ENCODE measurements at regions of chr7 and their contacts with region 1.

Region 1: GRCh38 chr7:7640221-7641128 is at the start of gene UMAD1:
- DNase-seq: peak; percentile 96 to 99
- ATAC-seq: peak; percentile 99 to 100 (median 100)
- H3K4me3 ChIP-seq: peak within 1 kb of the TSS; percentile 69 to 94 (median 78)
- H3K27ac ChIP-seq: peak within 1 kb of the TSS; percentile 55 to 94 (median 86)
- H3K4me1 ChIP-seq: peaks cover 2 to 28% (median 18%) of the 10 kb centered on the region in 9 donors
- H3K27me3 ChIP-seq: no peaks in the 10 kb centered on the region
- CTCF ChIP-seq: no peak
- total RNA-seq, gene UMAD1: 13.4 to 24.7 (median 18.0) TPM

Region 2: DNA sequence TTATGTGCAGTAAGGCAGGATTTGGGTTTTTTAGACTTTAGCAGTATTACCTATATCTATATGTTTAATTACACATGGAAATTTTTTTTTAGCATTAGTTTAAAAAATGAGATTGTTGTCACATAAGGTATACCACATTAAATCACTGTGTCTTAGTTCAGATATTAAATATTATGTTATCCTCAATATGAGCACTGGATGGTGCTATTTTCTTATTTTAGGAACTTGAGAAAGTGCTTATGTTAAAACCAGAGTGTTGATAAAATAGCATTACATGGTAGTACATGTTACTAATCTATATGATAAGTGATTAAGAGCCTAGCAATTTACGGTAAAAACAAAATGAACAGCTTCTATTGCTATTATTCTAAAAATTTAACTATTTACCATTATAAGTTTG is 45.0 kb before region 1 on chr7:
- intact Hi-C with region 1: no loop called
- DNase-seq: no peak
- ATAC-seq: peak in 1 of 8 donors; percentile 41
- H3K4me3 ChIP-seq: no peak overlapping the region
- H3K27ac ChIP-seq: no peak overlapping the region
- H3K4me1 ChIP-seq: no peaks in the 10 kb centered on the region
- H3K27me3 ChIP-seq: no peaks in the 10 kb centered on the region
- CTCF ChIP-seq: peak in 7 of 9 donors; percentile 38 to 60 (median 48)

Region 3: DNA sequence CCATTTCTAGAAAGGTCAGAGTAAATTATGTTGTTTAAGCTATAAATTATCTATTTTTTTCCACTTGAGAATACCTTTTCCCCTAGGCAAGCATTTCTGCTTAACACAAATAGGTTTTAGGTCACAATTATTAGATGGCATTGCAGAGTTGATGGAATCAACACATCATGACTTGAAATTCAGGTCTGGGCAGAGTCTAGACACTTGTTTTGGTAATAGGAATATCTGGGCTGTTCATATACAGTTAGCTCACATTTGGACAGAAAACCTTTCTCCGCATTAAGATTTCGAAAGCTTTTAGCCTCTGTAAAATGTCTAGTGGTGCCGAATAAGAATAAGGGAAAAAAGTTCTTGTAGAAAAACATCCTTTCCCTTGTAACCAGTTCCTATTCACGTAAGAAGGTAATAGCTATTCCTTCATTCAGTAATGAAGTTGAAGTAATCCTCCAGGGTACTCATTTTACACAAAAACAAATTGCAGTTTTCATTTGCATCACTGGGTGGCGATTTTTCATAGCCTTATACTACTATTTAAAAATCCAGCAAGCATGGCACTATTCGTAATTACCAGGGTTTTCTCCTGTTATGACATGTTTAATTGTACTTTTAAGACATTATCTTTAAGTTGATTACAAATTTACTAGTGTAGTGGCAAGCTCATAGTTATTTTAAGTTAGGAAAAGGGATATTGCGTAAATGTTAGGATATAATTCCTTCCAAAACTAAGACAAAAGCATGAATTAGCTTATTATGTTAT is 40.9 kb after region 1 on chr7:
- intact Hi-C with region 1: no loop called
- DNase-seq: peak in 1 of 2 donors; percentile 81
- ATAC-seq: peak in 7 of 8 donors; percentile 77 to 95 (median 91)
- H3K4me3 ChIP-seq: peak overlapping the region in 4 of 10 donors; percentile 6 to 13 (median 7)
- H3K27ac ChIP-seq: peak overlapping the region; percentile 7 to 77 (median 46)
- H3K4me1 ChIP-seq: peaks cover 0 to 35% (median 24%) of the 10 kb centered on the region in 9 donors
- H3K27me3 ChIP-seq: no peaks in the 10 kb centered on the region
- CTCF ChIP-seq: peak; percentile 56 to 85 (median 73)

Region 4: GRCh38 chr7:7702826-7703225 is 62.4 kb after region 1 on chr7:
- intact Hi-C with region 1: loop called in 1 of 10 experiments (anchors 2 kb)
- DNase-seq: no peak
- ATAC-seq: peak in 3 of 8 donors; percentile 37 to 40 (median 40)
- H3K4me3 ChIP-seq: no peak overlapping the region
- H3K27ac ChIP-seq: peak overlapping the region in 3 of 10 donors; percentile 11 to 35 (median 29)
- H3K4me1 ChIP-seq: peaks cover 6 to 91% (median 63%) of the 10 kb centered on the region in 9 donors
- H3K27me3 ChIP-seq: no peaks in the 10 kb centered on the region
- CTCF ChIP-seq: no peak

Region 5: DNA sequence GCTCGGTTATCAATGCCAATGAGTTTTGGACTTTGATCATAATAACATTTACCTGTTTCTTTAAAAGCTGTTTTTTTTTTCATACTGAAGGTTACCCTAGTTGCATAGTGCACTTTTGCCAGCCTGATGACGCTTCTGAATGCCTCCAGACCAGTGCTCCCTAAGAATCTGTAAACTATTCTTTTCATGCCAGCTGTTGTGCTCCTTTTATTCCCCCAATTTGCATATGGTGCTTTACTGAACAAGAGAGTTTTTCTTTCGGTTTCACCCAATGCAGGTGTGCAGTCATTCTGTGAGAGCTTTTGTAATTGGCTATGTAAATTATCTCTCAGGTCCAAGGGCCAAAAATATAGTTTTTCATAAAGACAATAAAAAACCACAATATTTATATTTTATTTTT is 280.0 kb after region 1 on chr7:
- intact Hi-C with region 1: no loop called
- DNase-seq: no peak
- ATAC-seq: no peak
- H3K4me3 ChIP-seq: no peak overlapping the region
- H3K27ac ChIP-seq: no peak overlapping the region
- H3K4me1 ChIP-seq: no peaks in the 10 kb centered on the region
- H3K27me3 ChIP-seq: no peaks in the 10 kb centered on the region
- CTCF ChIP-seq: no peak

Region 6: DNA sequence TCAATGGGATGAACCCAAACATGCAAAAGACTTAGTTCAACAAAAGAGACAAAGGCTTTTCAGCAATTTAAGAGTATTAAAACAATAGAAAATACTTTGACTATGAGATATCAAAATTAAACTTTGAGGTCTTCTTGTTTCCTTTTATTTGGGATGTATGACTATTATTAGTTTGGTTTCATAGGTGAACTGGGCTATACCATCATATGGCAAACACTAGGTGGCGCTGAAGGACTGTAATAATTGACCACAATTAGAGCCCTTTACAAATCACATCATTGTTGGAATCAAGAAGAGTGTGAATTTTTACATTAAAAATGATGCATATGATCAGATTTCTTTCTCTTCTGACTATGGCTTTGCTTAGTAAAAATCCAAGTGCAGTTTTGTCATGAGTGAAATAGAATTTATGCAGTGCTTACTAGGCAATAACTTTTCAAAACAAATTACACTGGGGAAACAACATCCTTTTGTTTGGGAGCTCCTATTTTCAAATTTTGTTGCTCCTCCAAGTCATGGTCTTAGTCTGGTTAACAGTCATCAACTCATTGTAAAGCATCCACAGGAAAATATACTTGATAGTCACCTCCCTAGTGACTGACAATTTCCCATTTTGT is 778.3 kb after region 1 on chr7:
- intact Hi-C with region 1: no loop called
- DNase-seq: peak in 1 of 2 donors; percentile 42
- ATAC-seq: peak in 2 of 8 donors; percentile 53 to 63
- H3K4me3 ChIP-seq: no peak overlapping the region
- H3K27ac ChIP-seq: no peak overlapping the region
- H3K4me1 ChIP-seq: no peaks in the 10 kb centered on the region
- H3K27me3 ChIP-seq: peaks cover 0 to 18% (median 4%) of the 10 kb centered on the region in 7 donors
- CTCF ChIP-seq: peak; percentile 47 to 84 (median 79)

Measured in heart right ventricle (tissue), 16 donors.